GM18951 (cell line): ENCODE measurements at regions of chr16 and their contacts with region 1.

Region 1: GRCh38 chr16:19389246-19389645 is 28.4 kb upstream of the TMC5 start:
- POLR2A ChIP-seq: no peak

Region 2: DNA sequence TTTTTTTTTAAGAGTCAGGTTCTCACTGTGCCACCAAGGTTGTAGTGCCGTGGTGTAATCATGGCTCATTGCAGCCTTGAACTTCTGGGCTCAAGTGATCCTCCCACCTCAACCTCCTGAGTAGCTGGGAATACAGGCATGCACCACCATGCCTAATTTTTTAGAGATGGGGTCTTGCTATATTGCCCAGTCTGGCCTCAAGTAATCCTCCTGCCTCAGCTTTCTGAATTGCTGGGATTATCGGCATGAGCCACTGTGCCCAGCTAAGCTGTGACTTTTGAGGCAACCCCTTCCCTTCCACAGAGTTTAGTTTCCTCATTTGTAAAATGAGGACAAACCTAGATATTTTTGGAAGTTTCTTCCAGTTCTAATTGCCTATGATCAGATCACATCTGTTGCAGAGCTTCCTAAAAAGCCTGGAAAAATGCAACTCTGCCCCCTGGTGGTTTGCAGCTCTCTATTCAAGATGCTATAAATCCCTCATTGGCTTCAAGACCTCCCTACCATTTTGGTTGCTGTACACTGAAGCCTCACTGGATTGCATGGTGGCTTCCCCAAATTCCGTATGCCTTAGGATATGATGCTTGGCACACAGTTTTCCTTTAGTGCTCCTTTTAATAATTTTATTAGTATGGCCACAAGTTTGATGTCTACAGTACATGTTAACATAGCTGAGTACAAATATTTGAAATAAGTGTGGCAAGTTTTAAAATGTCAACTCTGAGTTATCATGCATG is 113.3 kb after region 1 on chr16:
- in situ Hi-C with region 1: loop called (anchors 10 kb)
- POLR2A ChIP-seq: no peak